ENCODE measurements at regions of chr1 and their contacts with region 1.

Region 1: GRCh38 chr1:64136752-64137411 is 66.5 kb upstream of the UBE2U start:
- DNase-seq: peak; percentile 72
- ATAC-seq: peak; percentile 93
- H3K4me3 ChIP-seq: no peak overlapping the region
- H3K27ac ChIP-seq: peak overlapping the region; percentile 41; the same call in 1 of the 2 replicates
- H3K4me1 ChIP-seq: no peaks in the 10 kb centered on the region
- H3K27me3 ChIP-seq: no peaks in the 10 kb centered on the region
- CTCF ChIP-seq: peak; percentile 92

Region 2: GRCh38 chr1:63615768-63616420 is 521.0 kb before region 1 on chr1:
- CTCF ChIA-PET with region 1: no interaction called
- POLR2A ChIA-PET with region 1: no interaction called
- in situ Hi-C with region 1: no loop called
- intact Hi-C with region 1: loop called (anchors 5 kb)
- DNase-seq: peak; percentile 58
- ATAC-seq: peak; percentile 81
- H3K4me3 ChIP-seq: no peak overlapping the region
- H3K27ac ChIP-seq: no peak overlapping the region
- H3K4me1 ChIP-seq: peaks cover 7% of the 10 kb centered on the region
- H3K27me3 ChIP-seq: no peaks in the 10 kb centered on the region
- CTCF ChIP-seq: peak; percentile 80

Region 3: DNA sequence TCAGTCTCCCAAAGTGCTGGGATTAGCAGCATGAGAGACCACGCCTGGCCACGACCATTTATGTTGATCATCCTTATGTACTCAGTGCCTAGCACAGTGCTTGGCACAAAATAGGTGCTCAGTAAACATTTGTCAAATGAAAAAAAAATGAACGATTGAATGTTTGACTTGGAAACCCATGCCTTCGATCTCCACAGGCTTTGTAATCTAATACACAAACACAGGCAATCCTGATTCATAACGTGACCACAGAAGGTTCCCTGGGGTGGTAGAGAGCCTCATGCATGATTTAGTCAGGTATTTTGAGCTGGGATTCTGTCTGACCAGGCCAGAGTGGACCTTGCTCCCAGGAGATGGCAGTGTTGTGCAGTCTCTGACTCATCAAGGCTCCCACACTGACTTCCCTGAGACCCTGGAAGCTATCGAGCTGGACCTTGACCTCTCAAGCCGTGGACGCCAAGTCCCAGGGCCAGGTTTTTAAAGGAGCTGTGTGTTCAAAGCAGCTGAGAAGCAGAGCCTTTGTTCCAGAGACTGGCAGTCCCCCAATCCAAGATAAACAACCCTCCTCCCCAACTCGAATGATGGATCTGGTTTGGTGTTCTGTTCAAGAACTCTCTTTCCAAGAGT is 462.5 kb before region 1 on chr1:
- CTCF ChIA-PET with region 1: interaction called, 11 read pairs
- POLR2A ChIA-PET with region 1: no interaction called
- in situ Hi-C with region 1: no loop called
- intact Hi-C with region 1: no loop called
- DNase-seq: peak; percentile 73
- ATAC-seq: peak; percentile 98
- H3K4me3 ChIP-seq: no peak overlapping the region
- H3K27ac ChIP-seq: peak overlapping the region; percentile 64; the same call in 1 of the 2 replicates
- H3K4me1 ChIP-seq: 0 out of 2 replicates have a peak, but pooled peaks cover 5% of the 10 kb centered on the region
- H3K27me3 ChIP-seq: no peaks in the 10 kb centered on the region
- CTCF ChIP-seq: peak; percentile 84

Region 4: DNA sequence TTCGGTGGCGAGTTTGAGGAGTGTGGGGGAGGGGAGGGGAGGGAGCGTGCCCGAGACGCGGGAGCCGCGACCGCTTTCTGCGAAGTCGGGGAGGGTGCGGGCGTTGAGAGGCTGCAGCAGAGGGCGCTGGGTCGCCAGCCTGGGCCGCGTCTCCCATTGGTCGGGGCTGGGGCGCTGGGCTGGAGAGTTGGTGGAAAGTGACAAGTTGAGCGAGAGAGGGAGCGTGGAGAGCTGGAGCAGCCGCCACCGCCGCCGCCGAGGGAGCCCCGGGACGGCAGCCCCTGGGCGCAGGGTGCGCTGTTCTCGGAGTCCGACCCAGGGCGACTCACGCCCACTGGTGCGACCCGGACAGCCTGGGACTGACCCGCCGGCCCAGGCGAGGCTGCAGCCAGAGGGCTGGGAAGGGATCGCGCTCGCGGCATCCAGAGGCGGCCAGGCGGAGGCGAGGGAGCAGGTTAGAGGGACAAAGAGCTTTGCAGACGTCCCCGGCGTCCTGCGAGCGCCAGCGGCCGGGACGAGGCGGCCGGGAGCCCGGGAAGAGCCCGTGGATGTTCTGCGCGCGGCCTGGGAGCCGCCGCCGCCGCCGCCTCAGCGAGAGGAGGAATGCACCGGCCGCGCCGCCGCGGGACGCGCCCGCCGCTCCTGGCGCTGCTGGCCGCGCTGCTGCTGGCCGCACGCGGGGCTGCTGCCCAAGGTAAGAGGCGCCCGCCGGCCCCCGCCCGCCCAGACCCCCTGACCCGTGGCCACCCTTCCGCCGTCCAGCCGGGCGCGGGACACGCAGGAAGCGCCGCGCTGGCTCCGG is 362.9 kb before region 1 on chr1 and contains the start of gene ROR1:
- CTCF ChIA-PET with region 1: interaction called, 4 read pairs
- POLR2A ChIA-PET with region 1: no interaction called
- in situ Hi-C with region 1: no loop called
- intact Hi-C with region 1: loop called (anchors 10 kb)
- DNase-seq: peak; percentile 66
- ATAC-seq: peak; percentile 94
- H3K4me3 ChIP-seq: peak within 1 kb of the TSS; percentile 68 to 88
- H3K27ac ChIP-seq: peak within 1 kb of the TSS; percentile 91
- H3K4me1 ChIP-seq: peaks cover 50% of the 10 kb centered on the region
- H3K27me3 ChIP-seq: no peaks in the 10 kb centered on the region
- CTCF ChIP-seq: peak; percentile 91
- total RNA-seq, gene ROR1: 19.3 TPM

Region 5: DNA sequence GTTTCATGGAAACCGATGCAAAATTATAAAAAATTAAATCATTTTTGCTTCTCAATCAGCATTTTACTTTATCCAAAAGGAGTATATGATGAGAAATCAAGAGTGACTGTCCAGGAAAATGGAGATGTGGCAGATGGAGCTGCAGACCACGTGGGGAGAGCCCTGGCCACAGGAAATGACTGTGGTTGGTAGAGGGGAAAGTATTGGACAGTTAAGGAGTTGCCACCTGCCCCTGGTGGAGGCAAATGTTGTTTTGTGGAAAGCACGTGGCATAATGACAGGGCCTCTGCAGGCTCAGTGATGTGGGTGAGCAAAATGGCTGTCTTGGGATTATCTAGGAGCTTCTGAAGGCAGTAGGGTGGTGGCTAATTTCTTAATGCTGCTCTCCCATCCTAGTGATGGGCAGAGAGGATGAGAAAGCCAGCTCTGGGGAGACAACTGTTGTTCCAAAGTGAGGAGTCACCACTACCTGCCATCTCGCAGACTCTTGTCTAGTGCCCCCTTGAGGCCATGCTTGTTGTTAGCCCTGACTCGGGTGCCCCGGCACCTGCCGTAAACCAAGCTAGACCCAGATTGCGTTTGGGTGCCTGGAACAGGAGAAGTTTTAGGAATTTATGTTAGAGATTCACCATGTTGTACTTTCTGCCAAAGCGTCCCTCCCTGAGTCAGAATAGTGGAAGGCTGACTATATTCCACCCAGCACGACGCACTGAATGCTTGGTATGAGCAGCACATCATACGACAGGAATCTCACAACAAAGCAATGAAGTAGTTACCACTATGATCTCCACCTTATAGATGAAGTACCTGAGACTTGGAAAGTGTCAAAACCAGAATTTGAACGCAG is 219.1 kb before region 1 on chr1:
- CTCF ChIA-PET with region 1: interaction called, 4 read pairs
- POLR2A ChIA-PET with region 1: no interaction called
- in situ Hi-C with region 1: no loop called
- intact Hi-C with region 1: loop called (anchors 5 kb)
- DNase-seq: no peak
- ATAC-seq: no peak
- H3K4me3 ChIP-seq: no peak overlapping the region
- H3K27ac ChIP-seq: no peak overlapping the region; the same call in 1 of the 2 replicates
- H3K4me1 ChIP-seq: peaks cover 50% of the 10 kb centered on the region
- H3K27me3 ChIP-seq: no peaks in the 10 kb centered on the region
- CTCF ChIP-seq: peak; percentile 50

Region 6: GRCh38 chr1:64082459-64082858 is 54.4 kb before region 1 on chr1:
- CTCF ChIA-PET with region 1: no interaction called
- POLR2A ChIA-PET with region 1: no interaction called
- in situ Hi-C with region 1: no loop called
- intact Hi-C with region 1: no loop called
- DNase-seq: no peak
- ATAC-seq: no peak
- H3K4me3 ChIP-seq: no peak overlapping the region
- H3K27ac ChIP-seq: no peak overlapping the region
- H3K4me1 ChIP-seq: no peaks in the 10 kb centered on the region
- H3K27me3 ChIP-seq: no peaks in the 10 kb centered on the region
- CTCF ChIP-seq: no peak

Region 7: DNA sequence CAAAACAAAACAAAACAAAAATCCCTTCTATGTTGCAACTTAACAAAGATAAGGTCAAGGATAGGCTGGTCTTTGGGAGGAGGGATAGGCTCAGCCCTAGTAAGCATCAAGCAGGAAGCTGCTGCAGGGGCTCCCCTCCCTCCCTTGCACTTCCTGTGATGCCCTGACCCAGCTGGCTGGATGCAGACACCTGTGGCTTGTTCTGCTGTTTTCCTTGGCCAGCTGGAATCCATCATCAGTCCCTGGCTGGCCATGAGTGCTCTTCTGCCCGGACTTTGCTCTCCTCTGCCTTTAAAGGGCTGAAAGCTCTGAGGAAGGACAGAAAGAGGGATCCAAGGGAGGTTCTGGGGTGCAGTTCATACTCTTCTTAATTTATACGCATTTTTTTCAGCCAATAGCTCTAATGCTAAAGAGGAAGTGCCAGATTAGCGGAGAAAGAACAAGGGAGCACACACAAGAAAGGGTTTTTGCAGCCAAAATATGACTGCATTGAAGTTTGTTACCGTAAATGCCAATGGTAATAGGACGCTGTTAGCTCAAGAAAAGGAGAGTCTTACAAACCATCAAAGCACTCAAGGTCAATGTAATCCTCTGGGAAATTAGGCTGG is 46.6 kb after region 1 on chr1:
- CTCF ChIA-PET with region 1: no interaction called
- POLR2A ChIA-PET with region 1: no interaction called
- in situ Hi-C with region 1: no loop called
- intact Hi-C with region 1: no loop called
- DNase-seq: no peak
- ATAC-seq: no peak
- H3K4me3 ChIP-seq: no peak overlapping the region
- H3K27ac ChIP-seq: no peak overlapping the region
- H3K4me1 ChIP-seq: no peaks in the 10 kb centered on the region
- H3K27me3 ChIP-seq: no peaks in the 10 kb centered on the region
- CTCF ChIP-seq: no peak

Region 8: DNA sequence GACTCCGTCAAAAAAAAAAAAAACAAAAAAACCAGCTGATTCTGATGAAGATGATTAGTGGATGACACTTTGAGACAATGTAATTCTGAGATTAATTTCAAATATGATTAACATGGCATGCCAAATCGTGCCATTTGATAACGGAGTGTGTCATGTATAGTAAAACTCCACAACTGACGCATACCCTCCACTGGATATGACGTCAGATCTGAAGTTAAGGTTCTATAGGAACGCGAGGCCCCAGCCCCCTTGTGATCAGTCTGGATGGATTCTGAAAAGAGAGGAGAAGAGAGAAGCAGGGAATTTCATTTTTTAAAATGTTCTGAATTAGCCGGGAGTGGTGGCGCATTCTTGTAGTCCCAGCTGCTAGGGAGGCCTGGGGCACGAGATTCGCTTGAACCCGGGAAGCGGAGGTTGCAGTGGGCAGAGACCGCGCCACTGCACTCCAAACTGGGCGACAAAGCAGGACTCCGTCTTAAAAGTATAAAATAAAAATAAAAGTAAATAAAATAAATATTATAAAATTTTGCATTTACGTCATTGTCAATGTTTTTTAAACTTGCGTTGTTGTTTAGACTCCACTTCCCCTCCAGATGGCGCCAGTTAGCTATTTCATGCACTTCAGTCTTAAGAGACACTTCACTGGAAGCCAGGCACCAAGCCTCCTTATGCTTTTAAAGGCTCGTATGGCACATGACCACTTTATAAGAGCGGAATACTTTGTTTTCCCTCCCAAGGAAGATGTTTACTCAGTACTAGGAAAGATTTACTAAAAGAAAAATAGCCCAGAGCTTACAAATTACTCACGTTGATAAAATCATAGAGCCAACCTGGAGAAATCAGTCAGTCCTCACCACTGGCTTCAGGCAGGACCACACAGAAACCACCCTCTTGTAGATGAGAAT is 132.0 kb after region 1 on chr1:
- CTCF ChIA-PET with region 1: no interaction called
- POLR2A ChIA-PET with region 1: no interaction called
- in situ Hi-C with region 1: no loop called
- intact Hi-C with region 1: no loop called
- DNase-seq: peak; percentile 61
- ATAC-seq: peak; percentile 97
- H3K4me3 ChIP-seq: peak overlapping the region in 1 of 2 experiments; percentile 28; a peak in 2 of 4 replicates
- H3K27ac ChIP-seq: peak overlapping the region; percentile 69
- H3K4me1 ChIP-seq: peaks cover 13% of the 10 kb centered on the region
- H3K27me3 ChIP-seq: no peaks in the 10 kb centered on the region; the same call in 1 of the 2 replicates
- CTCF ChIP-seq: peak; percentile 80

Measured in Panc1 (cell line).